Transverse colon (tissue), 4 donors: ENCODE measurements at regions of chr3 and their contacts with region 1.

Region 1: GRCh38 chr3:32467333-32468070 is 35.1 kb downstream of the CMTM6 start:
- DNase-seq: peak; percentile 80
- H3K4me3 ChIP-seq: peak overlapping the region in 3 of 4 donors; percentile 19 to 47 (median 25)
- H3K27ac ChIP-seq: peak overlapping the region in 1 of 4 donors; percentile 37
- H3K4me1 ChIP-seq: peaks cover 0 to 13% (median 3%) of the 10 kb centered on the region in 4 donors
- H3K27me3 ChIP-seq: no peaks in the 10 kb centered on the region
- CTCF ChIP-seq: peak; percentile 94 to 99 (median 99)
- EP300 ChIP-seq: no peak
- POLR2A ChIP-seq: no peak

Region 2: GRCh38 chr3:32177702-32178198 is 289.8 kb before region 1 on chr3:
- in situ Hi-C with region 1: loop called in 3 of 4 experiments (anchors 25 kb)
- intact Hi-C with region 1: no loop called
- DNase-seq: peak; percentile 67
- H3K4me3 ChIP-seq: no peak overlapping the region
- H3K27ac ChIP-seq: no peak overlapping the region
- H3K4me1 ChIP-seq: no peaks in the 10 kb centered on the region
- H3K27me3 ChIP-seq: no peaks in the 10 kb centered on the region
- CTCF ChIP-seq: peak; percentile 46 to 69 (median 56)
- EP300 ChIP-seq: no peak
- POLR2A ChIP-seq: no peak

Region 3: GRCh38 chr3:32296256-32297204 is 171.0 kb before region 1 on chr3:
- in situ Hi-C with region 1: loop called in 2 of 4 experiments (anchors 10 kb)
- intact Hi-C with region 1: loop called (anchors 10 kb)
- DNase-seq: peak; percentile 63
- H3K4me3 ChIP-seq: no peak overlapping the region
- H3K27ac ChIP-seq: no peak overlapping the region
- H3K4me1 ChIP-seq: no peaks in the 10 kb centered on the region
- H3K27me3 ChIP-seq: no peaks in the 10 kb centered on the region
- CTCF ChIP-seq: peak; percentile 77 to 89 (median 83)
- EP300 ChIP-seq: no peak
- POLR2A ChIP-seq: no peak

Region 4: DNA sequence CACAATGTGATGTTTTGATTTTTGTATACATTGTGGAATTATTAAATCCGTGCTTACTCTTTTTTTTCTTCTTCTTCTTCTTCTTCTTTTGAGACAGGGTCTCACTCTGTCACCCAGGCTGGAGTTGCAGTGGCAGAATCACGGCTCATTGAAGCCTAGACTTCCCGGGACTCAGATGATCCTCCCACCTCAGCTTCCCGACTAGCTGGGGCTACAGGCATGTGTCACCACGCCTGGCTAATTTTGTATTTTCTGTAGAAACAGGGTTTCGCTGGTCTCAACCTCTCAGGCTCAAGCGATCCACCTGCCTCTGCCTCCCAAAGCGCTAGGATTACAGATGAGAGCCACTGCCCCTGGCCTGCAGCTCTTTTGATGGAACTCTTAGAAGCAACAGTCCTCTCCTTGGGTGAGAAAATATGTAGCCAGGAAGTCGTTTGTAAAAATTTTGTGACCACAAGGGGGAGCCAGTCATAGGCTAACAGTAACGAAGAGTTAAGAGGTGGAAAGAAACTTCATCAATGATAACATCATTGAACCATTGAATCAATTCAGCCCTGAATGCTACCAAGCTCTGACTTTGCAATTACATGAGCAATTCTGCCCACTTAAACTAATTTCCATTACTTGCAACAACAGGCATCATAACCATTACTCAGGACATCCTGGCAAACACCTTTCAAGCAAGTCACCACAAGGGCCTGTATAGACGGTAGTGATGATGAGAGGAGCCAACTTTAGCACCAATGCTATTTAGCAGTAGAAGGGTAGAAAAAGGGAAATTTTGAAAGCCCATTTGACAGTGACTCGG is 92.5 kb before region 1 on chr3:
- in situ Hi-C with region 1: loop called in 2 of 4 experiments (anchors 10 kb)
- intact Hi-C with region 1: loop called (anchors 2 kb)
- DNase-seq: peak; percentile 63
- H3K4me3 ChIP-seq: no peak overlapping the region
- H3K27ac ChIP-seq: no peak overlapping the region
- H3K4me1 ChIP-seq: no peaks in the 10 kb centered on the region
- H3K27me3 ChIP-seq: no peaks in the 10 kb centered on the region
- CTCF ChIP-seq: peak; percentile 68 to 76 (median 71)
- EP300 ChIP-seq: no peak
- POLR2A ChIP-seq: no peak

Region 5: DNA sequence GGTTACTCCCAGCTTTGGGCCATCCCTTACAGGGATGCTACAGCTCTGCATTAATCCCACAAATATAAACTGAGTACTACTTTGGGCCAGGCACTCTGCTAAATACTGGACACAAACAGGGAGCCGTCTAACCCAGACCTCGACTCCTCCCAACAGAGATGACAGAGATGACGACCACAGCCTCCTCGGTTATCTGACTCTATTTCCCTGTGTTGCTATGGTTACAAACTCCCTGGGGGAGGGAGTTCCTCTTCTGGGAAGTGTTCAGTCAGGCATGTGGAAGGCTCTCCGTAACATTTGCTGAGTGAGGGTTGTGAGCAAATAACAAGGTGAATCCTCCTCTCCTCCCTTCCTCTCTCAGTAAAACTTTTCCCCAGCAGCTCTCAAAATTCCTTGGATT is 82.6 kb before region 1 on chr3:
- in situ Hi-C with region 1: loop called in 2 of 4 experiments (anchors 5 to 10 kb)
- intact Hi-C with region 1: no loop called
- DNase-seq: no peak
- H3K4me3 ChIP-seq: no peak overlapping the region
- H3K27ac ChIP-seq: no peak overlapping the region
- H3K4me1 ChIP-seq: no peaks in the 10 kb centered on the region
- H3K27me3 ChIP-seq: no peaks in the 10 kb centered on the region
- CTCF ChIP-seq: no peak
- EP300 ChIP-seq: no peak
- POLR2A ChIP-seq: no peak

Region 6: GRCh38 chr3:32493437-32494414 is 26.2 kb after region 1 on chr3:
- in situ Hi-C with region 1: no loop called
- intact Hi-C with region 1: no loop called
- DNase-seq: no peak
- H3K4me3 ChIP-seq: no peak overlapping the region
- H3K27ac ChIP-seq: no peak overlapping the region
- H3K4me1 ChIP-seq: peaks cover 3 to 47% (median 14%) of the 10 kb centered on the region in 4 donors
- H3K27me3 ChIP-seq: no peaks in the 10 kb centered on the region
- CTCF ChIP-seq: no peak
- EP300 ChIP-seq: no peak
- POLR2A ChIP-seq: no peak

Region 7: GRCh38 chr3:32781210-32781968 is 313.9 kb after region 1 on chr3:
- in situ Hi-C with region 1: no loop called
- intact Hi-C with region 1: no loop called
- DNase-seq: peak; percentile 79
- H3K4me3 ChIP-seq: peak overlapping the region; percentile 13 to 71 (median 40)
- H3K27ac ChIP-seq: peak overlapping the region in 1 of 4 donors; percentile 36
- H3K4me1 ChIP-seq: peaks cover 0 to 10% (median 4%) of the 10 kb centered on the region in 4 donors
- H3K27me3 ChIP-seq: peaks cover 10% of the 10 kb centered on the region
- CTCF ChIP-seq: peak; percentile 42 to 86 (median 79)
- EP300 ChIP-seq: no peak
- POLR2A ChIP-seq: no peak

Region 8: DNA sequence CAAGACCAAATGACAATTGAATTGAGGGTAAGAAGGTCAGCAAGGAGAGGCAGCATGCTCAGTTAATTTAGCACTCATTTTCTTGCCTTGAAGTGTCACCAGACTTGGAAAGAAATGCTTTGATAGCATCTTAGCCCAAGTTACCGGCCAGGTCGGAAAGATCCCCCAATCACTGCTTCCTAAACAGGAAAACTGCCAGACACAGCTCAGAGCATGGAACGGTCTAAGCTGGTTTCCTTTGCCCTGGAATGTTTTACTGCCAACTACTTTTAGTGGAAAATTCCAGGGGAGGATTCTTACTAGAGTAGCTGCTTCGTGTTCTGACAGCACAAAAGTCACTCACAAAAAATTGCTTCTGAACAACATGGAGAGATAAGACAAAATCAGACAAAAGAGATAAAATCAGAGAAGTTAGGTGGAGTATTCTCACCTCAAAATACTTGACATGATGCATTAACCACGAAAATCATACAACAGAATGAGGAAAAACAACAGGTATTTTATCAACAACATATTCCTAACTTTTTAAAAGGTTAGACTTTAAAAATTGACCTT is 549.4 kb after region 1 on chr3:
- in situ Hi-C with region 1: no loop called
- intact Hi-C with region 1: no loop called
- DNase-seq: no peak
- H3K4me3 ChIP-seq: no peak overlapping the region
- H3K27ac ChIP-seq: no peak overlapping the region
- H3K4me1 ChIP-seq: no peaks in the 10 kb centered on the region
- H3K27me3 ChIP-seq: no peaks in the 10 kb centered on the region
- CTCF ChIP-seq: no peak
- EP300 ChIP-seq: no peak
- POLR2A ChIP-seq: no peak